GM10248 (cell line): ENCODE measurements at regions of chr6 and their contacts with region 1.

Region 1: DNA sequence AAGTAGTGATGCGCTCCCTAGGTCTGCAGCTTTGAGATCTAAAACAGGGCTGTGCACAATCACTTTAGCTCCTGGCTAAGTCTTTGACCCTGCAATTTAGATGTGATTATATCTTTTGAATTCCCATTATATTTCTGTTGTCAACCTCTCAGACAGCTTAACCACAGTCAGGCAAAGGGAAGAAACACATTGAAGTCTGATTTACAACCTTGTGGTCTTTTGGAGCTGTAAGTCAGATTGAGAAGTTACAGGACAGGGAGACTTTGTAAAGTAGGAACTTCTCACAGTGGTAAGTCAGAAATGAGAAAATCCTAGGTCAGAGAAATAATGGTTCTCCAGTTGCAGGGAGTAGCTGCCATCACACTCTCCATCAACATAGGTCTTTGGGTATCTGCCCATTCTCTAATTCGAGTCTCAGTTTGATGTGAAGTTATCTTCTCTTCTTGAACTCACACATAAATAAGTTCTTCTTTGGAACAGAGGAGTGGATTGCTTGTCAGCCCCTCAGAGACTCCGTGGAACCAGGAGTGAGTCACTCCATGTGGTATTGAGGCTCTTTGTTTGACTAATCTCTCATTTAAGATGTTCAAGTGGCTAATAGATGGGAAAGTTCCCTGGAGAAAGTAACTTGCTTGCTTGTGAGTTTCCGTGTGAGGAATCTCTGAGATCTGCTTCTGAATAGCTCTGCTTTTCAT is 35.0 kb upstream of the SGK1 start:
- DNase-seq: no peak
- CTCF ChIP-seq: no peak

Region 2: DNA sequence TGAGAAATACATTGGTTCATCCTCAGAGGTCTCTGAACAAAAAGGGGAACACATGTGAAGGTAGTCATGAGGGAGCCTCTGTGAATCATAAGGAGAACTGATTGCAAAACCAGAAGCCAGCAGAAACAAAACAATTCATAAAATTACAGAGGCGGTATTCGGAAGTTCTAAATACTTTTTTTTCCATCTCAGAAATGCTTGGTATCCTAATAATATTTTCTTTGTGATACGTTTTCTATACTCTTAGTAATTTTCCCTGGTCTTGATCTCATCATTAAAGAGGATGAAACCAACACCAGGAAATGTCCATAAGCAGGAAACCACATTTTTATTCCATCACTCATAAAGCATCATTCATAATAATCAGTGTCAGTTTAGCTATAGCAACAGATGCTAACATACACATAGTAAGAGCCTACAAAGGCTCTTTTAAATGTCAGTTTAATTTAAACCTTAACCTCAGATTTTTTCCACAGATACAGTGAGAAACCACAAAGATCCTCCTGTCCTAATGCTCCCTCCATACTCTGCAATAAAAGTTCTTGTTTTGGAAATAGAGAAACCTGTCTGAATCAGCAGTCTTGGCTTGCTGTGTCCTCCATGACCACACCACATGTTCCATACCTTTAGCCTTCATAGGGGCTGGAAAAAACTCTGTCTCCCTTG is 64.3 kb before region 1 on chr6:
- CTCF ChIA-PET with region 1: no interaction called
- POLR2A ChIA-PET with region 1: no interaction called
- DNase-seq: peak; percentile 46
- CTCF ChIP-seq: no peak

Region 3: DNA sequence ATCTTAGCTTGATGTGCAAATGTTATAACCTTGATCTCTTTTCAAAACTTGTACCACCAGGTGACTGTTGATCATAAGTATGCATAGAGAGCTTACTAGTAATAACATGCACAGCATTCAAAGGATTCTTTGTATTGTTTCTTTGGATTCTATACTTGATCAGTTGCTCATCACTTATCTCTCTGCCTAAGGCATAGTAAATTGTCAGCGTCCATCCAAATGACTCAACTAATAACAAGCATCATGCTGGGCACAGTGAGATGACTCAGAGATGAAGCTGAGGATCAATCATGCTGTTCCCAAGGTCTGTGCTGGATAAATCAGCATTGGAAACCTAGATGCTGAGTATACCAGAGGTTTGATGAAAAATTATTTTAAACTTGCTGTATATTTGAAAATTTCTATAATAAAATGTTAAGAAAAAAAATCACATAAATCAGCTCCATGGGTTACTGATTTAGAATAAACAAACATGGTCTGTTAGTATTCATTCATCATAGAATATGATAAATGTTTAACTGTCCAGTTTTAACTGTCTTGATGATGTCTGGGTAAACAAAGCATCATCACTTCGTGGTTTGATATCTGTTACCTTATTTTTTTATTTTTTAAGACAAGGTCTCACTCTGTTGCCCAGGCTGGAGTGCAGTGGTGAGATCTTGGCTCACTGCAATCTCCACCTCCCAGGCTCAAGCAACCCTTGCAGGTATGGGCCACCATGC is 10.5 kb after region 1 on chr6:
- CTCF ChIA-PET with region 1: interaction called, 27 read pairs
- POLR2A ChIA-PET with region 1: no interaction called
- DNase-seq: no peak
- CTCF ChIP-seq: no peak

Region 4: DNA sequence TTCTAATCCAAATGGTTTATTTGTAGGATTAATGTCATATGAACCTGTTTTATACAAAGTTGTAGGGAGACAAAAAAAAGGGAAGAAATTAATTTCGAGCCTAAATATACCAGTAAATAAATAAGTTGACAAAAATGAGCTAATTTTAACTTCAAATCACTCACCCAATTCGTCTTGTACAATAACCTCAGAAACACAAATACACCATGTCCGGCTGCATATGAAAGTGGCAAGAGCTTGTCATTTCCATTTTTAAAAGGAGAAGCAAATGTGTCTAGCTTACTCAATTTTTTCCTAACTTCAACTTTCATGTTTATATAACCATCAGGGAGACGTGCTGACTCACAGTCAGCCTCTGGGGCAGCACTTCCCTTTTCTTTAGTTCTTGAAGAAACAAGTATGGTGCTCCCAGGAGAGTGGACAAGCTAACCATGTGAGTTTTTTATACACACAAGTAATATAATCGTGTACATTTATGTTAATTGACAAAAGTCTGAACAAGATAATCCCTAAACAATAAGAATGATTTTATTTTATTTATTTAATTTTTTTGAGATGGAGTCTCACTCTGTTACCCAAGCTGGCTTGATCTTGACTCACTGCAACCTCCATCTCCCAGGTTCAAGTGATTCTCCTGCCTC is 20.5 kb after region 1 on chr6:
- CTCF ChIA-PET with region 1: interaction called, 13 read pairs
- POLR2A ChIA-PET with region 1: no interaction called
- DNase-seq: peak; percentile 65
- CTCF ChIP-seq: no peak

Region 5: GRCh38 chr6:134741200-134741536 is 388.2 kb after region 1 on chr6:
- CTCF ChIA-PET with region 1: no interaction called
- POLR2A ChIA-PET with region 1: no interaction called
- DNase-seq: no peak
- CTCF ChIP-seq: no peak